ENCODE measurements at regions of chr15 and their contacts with region 1.

Region 1: DNA sequence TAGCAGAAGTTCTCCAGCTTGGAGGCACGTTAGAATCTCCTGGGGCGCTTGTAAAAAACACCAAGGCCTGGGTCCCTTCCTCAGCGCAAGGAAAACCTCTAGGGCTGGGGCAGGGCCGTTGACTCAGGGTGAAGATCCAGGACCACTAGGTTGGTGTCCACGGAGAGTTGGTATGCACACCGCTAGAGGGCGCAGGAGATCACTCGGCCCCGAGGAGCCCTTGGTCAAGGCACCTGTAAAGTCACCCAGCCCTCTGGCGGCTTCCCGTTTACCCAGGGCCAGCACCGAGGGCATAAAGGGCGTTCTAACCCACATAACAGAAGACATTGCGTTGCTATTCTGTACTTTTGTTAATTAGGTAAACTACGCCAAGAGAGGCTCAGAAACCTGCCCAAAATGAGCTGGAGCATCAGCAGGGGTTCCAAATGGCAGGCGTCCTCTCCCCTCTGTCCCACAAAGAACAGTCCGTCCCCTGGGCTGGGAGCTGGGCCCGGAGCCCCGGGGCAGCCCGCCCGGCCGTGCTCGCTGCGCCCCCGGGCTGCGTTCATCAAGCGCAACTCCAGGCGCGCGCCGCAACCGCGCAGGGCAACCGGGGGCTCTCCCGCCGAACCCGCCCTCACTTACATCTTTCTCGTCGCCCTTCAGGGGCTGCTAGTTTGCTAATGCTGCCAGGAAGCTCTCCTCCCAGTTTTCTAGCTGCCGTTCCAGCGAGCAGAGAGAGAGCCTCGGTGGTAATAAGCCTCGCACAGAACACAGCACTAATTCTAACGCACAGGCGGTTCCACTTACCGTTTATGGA is 332.1 kb downstream of the ARRDC4 start:
- DNase-seq: peak; percentile 92
- ATAC-seq: peak; percentile 95
- H3K4me3 Mint-ChIP-seq: peak overlapping the region; percentile 79
- H3K27ac Mint-ChIP-seq: no peak overlapping the region
- H3K4me1 Mint-ChIP-seq: peaks cover 15% of the 10 kb centered on the region
- H3K27me3 Mint-ChIP-seq: peaks cover 17% of the 10 kb centered on the region
- CTCF ChIP-seq: peak; percentile 90

Region 2: GRCh38 chr15:98196371-98196770 is 96.3 kb before region 1 on chr15:
- CTCF ChIA-PET with region 1: no interaction called
- POLR2A ChIA-PET with region 1: no interaction called
- DNase-seq: no peak
- ATAC-seq: no peak
- H3K4me3 Mint-ChIP-seq: no peak overlapping the region
- H3K27ac Mint-ChIP-seq: no peak overlapping the region
- H3K4me1 Mint-ChIP-seq: peaks cover 6% of the 10 kb centered on the region
- H3K27me3 Mint-ChIP-seq: no peaks in the 10 kb centered on the region
- CTCF ChIP-seq: no peak

Region 3: GRCh38 chr15:98421419-98422129 is 128.9 kb after region 1 on chr15:
- CTCF ChIA-PET with region 1: interaction called, 20 read pairs
- POLR2A ChIA-PET with region 1: no interaction called
- DNase-seq: peak; percentile 89
- ATAC-seq: peak; percentile 78
- H3K4me3 Mint-ChIP-seq: peak overlapping the region; percentile 60
- H3K27ac Mint-ChIP-seq: no peak overlapping the region
- H3K4me1 Mint-ChIP-seq: peaks cover 11% of the 10 kb centered on the region
- H3K27me3 Mint-ChIP-seq: peaks cover 45% of the 10 kb centered on the region
- CTCF ChIP-seq: peak; percentile 99

Region 4: GRCh38 chr15:98428253-98428989 is 135.8 kb after region 1 on chr15:
- CTCF ChIA-PET with region 1: interaction called, 10 read pairs
- POLR2A ChIA-PET with region 1: no interaction called
- DNase-seq: peak; percentile 85
- ATAC-seq: peak; percentile 87
- H3K4me3 Mint-ChIP-seq: peak overlapping the region; percentile 58
- H3K27ac Mint-ChIP-seq: no peak overlapping the region
- H3K4me1 Mint-ChIP-seq: no peaks in the 10 kb centered on the region
- H3K27me3 Mint-ChIP-seq: peaks cover 57% of the 10 kb centered on the region
- CTCF ChIP-seq: peak; percentile 82

Region 5: GRCh38 chr15:98480844-98481243 is 188.2 kb after region 1 on chr15:
- CTCF ChIA-PET with region 1: no interaction called
- POLR2A ChIA-PET with region 1: no interaction called
- DNase-seq: no peak
- ATAC-seq: no peak
- H3K4me3 Mint-ChIP-seq: no peak overlapping the region
- H3K27ac Mint-ChIP-seq: no peak overlapping the region
- H3K4me1 Mint-ChIP-seq: no peaks in the 10 kb centered on the region
- H3K27me3 Mint-ChIP-seq: no peaks in the 10 kb centered on the region; the same call in 1 of the 2 replicates
- CTCF ChIP-seq: no peak

Region 6: GRCh38 chr15:98513428-98513991 is 220.9 kb after region 1 on chr15:
- CTCF ChIA-PET with region 1: no interaction called
- POLR2A ChIA-PET with region 1: no interaction called
- DNase-seq: no peak
- ATAC-seq: no peak
- H3K4me3 Mint-ChIP-seq: no peak overlapping the region
- H3K27ac Mint-ChIP-seq: no peak overlapping the region
- H3K4me1 Mint-ChIP-seq: no peaks in the 10 kb centered on the region
- H3K27me3 Mint-ChIP-seq: no peaks in the 10 kb centered on the region
- CTCF ChIP-seq: no peak